B cell (primary cell): ENCODE measurements at regions of chr5 and their contacts with region 1.

Region 1: GRCh38 chr5:95961617-95962474 is at the start of gene ELL2:
- DNase-seq: peak; percentile 99
- ATAC-seq: peak; percentile 81
- H3K4me3 ChIP-seq: peak within 1 kb of the TSS; percentile 91 to 98 (median 92)
- H3K4me3 Mint-ChIP-seq: peak within 1 kb of the TSS; percentile 99
- H3K27ac ChIP-seq: peak within 1 kb of the TSS; percentile 92 to 99
- H3K27ac Mint-ChIP-seq: peak within 1 kb of the TSS; percentile 97
- H3K4me1 ChIP-seq: peaks cover 21 to 36% of the 10 kb centered on the region in 2 donors
- H3K4me1 Mint-ChIP-seq: peaks cover 47% of the 10 kb centered on the region
- H3K27me3 ChIP-seq: no peaks in the 10 kb centered on the region
- H3K27me3 Mint-ChIP-seq: peaks cover 2% of the 10 kb centered on the region
- CTCF ChIP-seq: no peak
- total RNA-seq, gene ELL2: 27.0 and 31.6 TPM in 2 replicates

Region 2: DNA sequence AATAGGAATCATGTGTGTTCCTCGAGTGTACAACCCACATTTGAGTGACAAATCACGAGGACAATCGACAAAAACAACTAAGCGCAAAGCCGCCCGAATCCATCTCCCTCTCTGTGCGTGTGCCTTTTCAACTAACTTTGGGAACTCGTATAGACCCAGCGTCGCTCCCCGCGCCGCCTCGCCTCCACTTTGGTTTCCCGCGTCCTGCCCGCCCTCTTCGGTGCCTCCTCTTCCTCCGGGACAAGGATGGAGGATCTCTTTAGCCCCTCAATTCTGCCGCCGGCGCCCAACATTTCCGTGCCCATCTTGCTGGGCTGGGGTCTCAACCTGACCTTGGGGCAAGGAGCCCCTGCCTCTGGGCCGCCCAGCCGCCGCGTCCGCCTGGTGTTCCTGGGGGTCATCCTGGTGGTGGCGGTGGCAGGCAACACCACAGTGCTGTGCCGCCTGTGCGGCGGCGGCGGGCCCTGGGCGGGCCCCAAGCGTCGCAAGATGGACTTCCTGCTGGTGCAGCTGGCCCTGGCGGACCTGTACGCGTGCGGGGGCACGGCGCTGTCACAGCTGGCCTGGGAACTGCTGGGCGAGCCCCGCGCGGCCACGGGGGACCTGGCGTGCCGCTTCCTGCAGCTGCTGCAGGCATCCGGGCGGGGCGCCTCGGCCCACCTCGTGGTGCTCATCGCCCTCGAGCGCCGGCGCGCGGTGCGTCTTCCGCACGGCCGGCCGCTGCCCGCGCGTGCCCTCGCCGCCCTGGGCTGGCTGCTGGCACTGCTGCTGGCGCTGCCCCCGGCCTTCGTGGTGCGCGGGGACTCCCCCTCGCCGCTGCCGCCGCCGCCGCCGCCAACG is 341.6 kb before region 1 on chr5 and contains the start of gene GPR150:
- CTCF ChIA-PET with region 1: no interaction called
- POLR2A ChIA-PET with region 1: no interaction called
- intact Hi-C with region 1: loop called (anchors 1 kb)
- DNase-seq: peak; percentile 78
- ATAC-seq: peak; percentile 79
- H3K4me3 ChIP-seq: peak within 1 kb of the TSS; percentile 58 to 82 (median 70)
- H3K4me3 Mint-ChIP-seq: peak within 1 kb of the TSS; percentile 90
- H3K27ac ChIP-seq: no peak within 1 kb of the TSS
- H3K27ac Mint-ChIP-seq: peak within 1 kb of the TSS; percentile 74
- H3K4me1 ChIP-seq: peaks cover 23 to 26% of the 10 kb centered on the region in 2 donors
- H3K4me1 Mint-ChIP-seq: peaks cover 26% of the 10 kb centered on the region
- H3K27me3 ChIP-seq: peaks cover 0 to 7% (median 0%) of the 10 kb centered on the region in 4 experiments
- H3K27me3 Mint-ChIP-seq: no peaks in the 10 kb centered on the region
- CTCF ChIP-seq: no peak
- total RNA-seq, gene GPR150: 0.27 and 0.34 TPM in 2 replicates

Region 3: GRCh38 chr5:95808686-95809413 is 153.0 kb before region 1 on chr5:
- CTCF ChIA-PET with region 1: no interaction called
- POLR2A ChIA-PET with region 1: no interaction called
- intact Hi-C with region 1: loop called (anchors 1 kb)
- DNase-seq: peak; percentile 95
- ATAC-seq: peak; percentile 100
- H3K4me3 ChIP-seq: peak overlapping the region in 3 of 5 experiments; percentile 27 to 39 (median 33)
- H3K4me3 Mint-ChIP-seq: peak overlapping the region; percentile 86
- H3K27ac ChIP-seq: peak overlapping the region; percentile 81 to 97
- H3K27ac Mint-ChIP-seq: peak overlapping the region; percentile 97
- H3K4me1 ChIP-seq: peaks cover 34 to 37% of the 10 kb centered on the region in 2 donors
- H3K4me1 Mint-ChIP-seq: peaks cover 58% of the 10 kb centered on the region
- H3K27me3 ChIP-seq: no peaks in the 10 kb centered on the region
- H3K27me3 Mint-ChIP-seq: no peaks in the 10 kb centered on the region
- CTCF ChIP-seq: no peak

Region 4: GRCh38 chr5:95858661-95859326 is 103.1 kb before region 1 on chr5:
- CTCF ChIA-PET with region 1: interaction called, 3 read pairs
- POLR2A ChIA-PET with region 1: no interaction called
- intact Hi-C with region 1: loop called (anchors 5 kb)
- DNase-seq: peak; percentile 89
- ATAC-seq: peak; percentile 94
- H3K4me3 ChIP-seq: peak overlapping the region in 3 of 5 experiments; percentile 7 to 25 (median 18)
- H3K4me3 Mint-ChIP-seq: peak overlapping the region; percentile 76
- H3K27ac ChIP-seq: no peak overlapping the region
- H3K27ac Mint-ChIP-seq: no peak overlapping the region
- H3K4me1 ChIP-seq: peaks cover 15 to 18% of the 10 kb centered on the region in 2 donors
- H3K4me1 Mint-ChIP-seq: peaks cover 30% of the 10 kb centered on the region
- H3K27me3 ChIP-seq: peaks cover 0 to 6% (median 1%) of the 10 kb centered on the region in 4 experiments
- H3K27me3 Mint-ChIP-seq: peaks cover 11% of the 10 kb centered on the region
- CTCF ChIP-seq: peak; percentile 97

Region 5: GRCh38 chr5:96336351-96336985 is 374.6 kb after region 1 on chr5:
- CTCF ChIA-PET with region 1: interaction called, 13 read pairs
- POLR2A ChIA-PET with region 1: no interaction called
- intact Hi-C with region 1: loop called (anchors 1 kb)
- DNase-seq: peak; percentile 75
- ATAC-seq: peak; percentile 78
- H3K4me3 ChIP-seq: no peak overlapping the region
- H3K4me3 Mint-ChIP-seq: no peak overlapping the region
- H3K27ac ChIP-seq: no peak overlapping the region
- H3K27ac Mint-ChIP-seq: no peak overlapping the region
- H3K4me1 ChIP-seq: peaks cover 0 to 4% of the 10 kb centered on the region in 2 donors
- H3K4me1 Mint-ChIP-seq: no peaks in the 10 kb centered on the region
- H3K27me3 ChIP-seq: no peaks in the 10 kb centered on the region
- H3K27me3 Mint-ChIP-seq: peaks cover 15% of the 10 kb centered on the region
- CTCF ChIP-seq: peak; percentile 88

Region 6: DNA sequence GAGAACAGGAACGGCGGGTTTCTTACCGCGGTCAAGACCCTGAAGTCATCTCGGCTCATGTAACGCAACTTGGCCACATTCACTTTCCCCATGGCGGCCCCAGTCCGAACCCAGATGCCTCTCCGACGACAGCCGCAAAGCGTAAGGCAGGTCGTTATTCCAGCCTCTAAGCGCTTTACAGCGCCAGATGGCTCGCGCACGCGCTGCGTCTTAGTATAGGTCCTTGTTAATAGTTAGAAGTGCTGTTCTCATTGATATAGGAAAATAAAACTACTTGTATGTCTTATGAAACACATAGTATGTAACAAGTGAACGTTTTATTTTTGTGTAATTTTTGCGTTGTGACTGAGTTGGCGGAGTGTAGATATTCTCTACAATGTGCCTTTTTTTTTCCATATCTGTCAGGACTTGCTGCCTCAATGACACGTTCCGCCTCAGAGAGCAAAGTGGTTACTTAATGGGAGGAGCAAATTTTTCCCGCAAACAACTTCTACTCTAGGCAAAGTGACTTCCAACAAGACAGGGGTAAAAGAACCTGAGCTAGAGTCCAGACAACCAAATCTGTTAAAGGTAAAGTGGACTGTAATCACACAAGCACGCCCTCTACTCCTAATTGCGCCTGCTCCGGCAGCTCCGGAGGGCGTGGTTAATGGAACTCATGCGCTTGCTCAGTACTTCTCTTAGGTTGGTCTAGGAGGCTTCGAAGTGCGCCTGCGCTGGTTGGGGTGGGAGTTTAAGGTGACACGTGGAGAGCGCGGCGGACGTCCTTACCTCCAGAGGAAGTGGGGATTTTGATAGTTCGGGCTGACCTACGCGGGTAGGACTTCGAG is 1221.5 kb after region 1 on chr5 and contains the start of gene RIOK2:
- CTCF ChIA-PET with region 1: no interaction called
- POLR2A ChIA-PET with region 1: no interaction called
- intact Hi-C with region 1: loop called (anchors 2 kb)
- DNase-seq: peak; percentile 93
- ATAC-seq: peak; percentile 87
- H3K4me3 ChIP-seq: peak within 1 kb of the TSS; percentile 68 to 96 (median 88)
- H3K4me3 Mint-ChIP-seq: peak within 1 kb of the TSS; percentile 97
- H3K27ac ChIP-seq: peak within 1 kb of the TSS; percentile 91 to 99
- H3K27ac Mint-ChIP-seq: peak within 1 kb of the TSS; percentile 100
- H3K4me1 ChIP-seq: peaks cover 12 to 15% of the 10 kb centered on the region in 2 donors
- H3K4me1 Mint-ChIP-seq: peaks cover 33% of the 10 kb centered on the region
- H3K27me3 ChIP-seq: no peaks in the 10 kb centered on the region
- H3K27me3 Mint-ChIP-seq: no peaks in the 10 kb centered on the region
- CTCF ChIP-seq: no peak
- total RNA-seq, gene RIOK2: 32.8 and 37.2 TPM in 2 replicates